HEK293T (cell line): ENCODE measurements at regions of chr7 and their contacts with region 1.

Region 1: DNA sequence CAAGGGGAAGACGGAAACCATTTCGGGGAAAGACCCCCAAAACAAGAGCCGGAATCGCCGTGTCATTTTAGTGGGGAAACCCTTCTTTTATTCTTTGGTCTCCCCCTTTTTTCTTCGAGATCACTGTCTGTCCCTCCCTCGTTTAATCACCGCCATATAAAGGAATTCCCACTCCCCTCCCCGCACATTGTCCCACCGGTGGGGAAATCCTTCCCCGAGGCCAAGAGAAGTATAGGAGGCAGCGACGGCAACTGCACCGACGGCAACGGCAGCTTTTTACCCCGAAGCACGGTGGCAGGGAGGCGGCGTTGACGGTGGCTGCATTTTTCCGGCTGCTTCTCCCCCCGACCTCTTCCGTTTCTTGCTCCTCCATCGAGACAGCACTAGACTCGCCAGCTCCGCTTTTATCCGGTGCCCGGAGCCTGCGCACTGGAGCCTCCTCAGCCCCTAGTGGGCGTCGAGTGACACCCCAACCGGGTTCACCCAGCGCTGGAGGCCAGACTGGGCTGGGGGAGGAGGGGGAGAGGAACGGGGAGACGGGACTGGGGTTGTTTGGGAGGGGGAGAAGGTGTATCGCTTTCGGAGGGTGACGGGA is 687 bp upstream of the KMT2E start:
- DNase-seq: peak; percentile 72

Region 2: DNA sequence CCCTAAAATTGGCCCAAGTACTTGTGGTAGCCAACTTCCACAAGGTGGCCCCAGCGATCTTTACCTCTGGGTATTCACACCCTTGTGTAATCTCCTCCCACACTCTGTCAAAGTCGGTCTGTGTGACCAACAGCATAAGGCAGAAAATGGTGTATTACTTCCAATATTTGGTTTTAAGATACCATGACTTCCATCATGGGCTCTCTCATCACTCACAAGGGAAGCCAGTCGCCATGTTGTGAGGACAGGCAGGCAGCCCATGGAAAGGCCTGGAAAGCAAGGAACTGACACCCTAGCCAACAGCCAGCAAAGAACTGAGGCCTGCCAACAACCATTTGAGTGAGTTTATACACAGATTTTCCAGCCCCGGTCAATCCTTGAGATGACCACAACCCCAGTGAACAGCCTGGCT is 90.3 kb before region 1 on chr7:
- CTCF ChIA-PET with region 1: interaction called, 3 read pairs
- POLR2A ChIA-PET with region 1: interaction called, 10 read pairs
- DNase-seq: peak; percentile 61

Region 3: DNA sequence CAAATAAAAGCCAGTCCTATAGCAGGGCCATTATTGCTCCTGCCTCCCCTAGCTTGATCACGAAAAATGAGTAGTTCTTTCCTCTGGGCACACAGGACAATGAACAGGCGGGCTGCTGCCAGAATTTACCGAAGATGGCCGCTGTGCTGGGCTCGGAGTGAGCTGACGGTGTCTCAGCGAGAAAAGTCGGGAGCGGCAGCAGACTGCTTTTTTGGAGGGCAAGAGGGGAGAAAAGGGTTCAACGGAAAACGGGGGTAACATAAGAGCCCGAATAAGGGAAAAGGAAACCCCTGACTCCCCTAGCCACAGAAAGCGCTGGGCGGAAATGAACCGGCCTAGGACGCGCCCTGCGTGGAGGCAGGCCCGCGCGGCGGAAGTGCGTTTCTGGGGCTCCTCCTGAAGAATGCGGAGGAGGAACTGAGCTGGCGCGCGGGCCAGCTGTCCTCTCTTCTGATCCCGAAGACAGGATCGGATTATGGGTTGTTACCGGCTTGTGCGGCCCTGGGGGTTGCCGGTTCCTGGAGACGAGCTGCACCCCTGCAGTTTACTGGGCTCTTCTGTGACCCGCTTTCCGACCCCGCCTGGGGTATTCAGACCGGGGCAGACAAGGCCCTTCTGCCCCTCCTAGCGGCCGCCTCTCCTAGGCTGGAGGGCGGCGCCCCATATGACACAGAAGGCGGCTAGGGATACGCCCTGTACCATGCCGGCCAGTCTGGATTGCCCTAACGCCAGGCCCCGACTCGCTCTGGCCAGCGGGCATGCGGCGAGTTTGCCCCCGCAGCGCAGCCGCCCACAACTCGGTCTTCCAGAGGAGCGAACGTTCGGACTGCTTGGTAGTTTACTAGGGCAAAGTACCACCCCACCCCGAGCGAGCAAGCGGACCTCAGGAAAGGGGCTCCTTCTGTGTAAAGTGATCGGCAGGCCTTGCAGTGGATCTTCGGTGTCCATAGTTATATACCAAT is 29.5 kb before region 1 on chr7:
- CTCF ChIA-PET with region 1: interaction called, 6 read pairs
- POLR2A ChIA-PET with region 1: interaction called, 21 read pairs
- DNase-seq: peak; percentile 25

Region 4: DNA sequence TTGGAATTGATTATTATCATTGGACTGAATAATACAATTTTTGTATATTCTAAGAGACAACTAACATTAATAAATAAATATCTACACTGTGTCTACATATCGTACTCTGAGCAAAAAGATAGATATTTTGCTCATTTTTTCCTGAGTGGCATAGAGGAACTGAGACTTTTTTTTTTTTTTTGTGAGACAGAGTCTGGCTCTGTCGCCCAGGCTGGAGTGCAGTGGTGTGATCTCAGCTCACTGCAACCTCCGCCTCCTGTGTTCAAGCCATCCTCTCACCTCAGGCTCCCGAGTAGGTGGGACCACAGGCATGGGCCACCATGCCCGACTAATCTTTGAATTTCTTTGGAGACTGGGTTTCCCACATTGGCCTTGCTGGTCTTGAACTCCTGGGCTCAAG is 14.7 kb after region 1 on chr7:
- CTCF ChIA-PET with region 1: no interaction called
- POLR2A ChIA-PET with region 1: interaction called, 24 read pairs
- DNase-seq: no peak